GM12878 (cell line): ENCODE measurements at regions of chr3 and their contacts with region 1.

Region 1: GRCh38 chr3:153038779-153039178 is 123.2 kb upstream of the RAP2B start:
- DNase-seq: no peak
- ATAC-seq: no peak
- H3K4me3 ChIP-seq: no peak overlapping the region
- H3K27ac ChIP-seq: no peak overlapping the region
- H3K4me1 ChIP-seq: no peaks in the 10 kb centered on the region
- H3K27me3 ChIP-seq: no peaks in the 10 kb centered on the region
- CTCF ChIP-seq: no peak
- EP300 ChIP-seq: no peak
- POLR2A ChIP-seq: no peak
- RAD21 ChIP-seq: no peak

Region 2: DNA sequence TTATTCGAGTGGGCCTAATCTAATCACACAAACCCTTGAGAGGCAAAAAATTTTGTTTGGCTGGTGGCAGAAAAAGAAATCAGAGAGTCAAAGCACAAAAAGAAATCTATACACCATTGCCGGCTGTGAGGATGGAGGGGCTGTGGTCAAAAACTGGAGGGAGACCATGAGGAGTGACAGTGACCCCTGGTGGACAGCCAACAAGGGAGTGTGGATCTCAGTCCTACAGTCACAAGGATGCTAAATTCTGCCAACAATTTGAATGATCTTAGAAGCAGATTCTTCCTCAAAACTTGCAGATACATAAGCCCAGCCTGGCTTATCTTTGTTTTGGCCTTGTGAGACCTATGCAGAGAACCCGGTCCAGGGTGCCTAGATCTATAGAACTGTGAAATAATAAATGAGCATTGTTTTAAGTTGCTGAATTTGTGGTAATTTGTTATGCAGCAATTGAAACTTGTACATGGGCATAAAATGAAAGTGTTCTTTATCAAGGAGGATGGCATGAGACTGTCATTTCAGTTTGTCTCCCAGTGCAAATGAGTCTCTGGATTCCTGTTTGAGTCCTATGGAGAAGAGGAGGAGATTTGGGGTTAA is 979.4 kb after region 1 on chr3:
- CTCF ChIA-PET with region 1: interaction called, 5 read pairs
- POLR2A ChIA-PET with region 1: no interaction called
- RAD21 ChIA-PET with region 1: interaction called, 4 read pairs
- SMC1A ChIA-PET with region 1: no interaction called
- in situ Hi-C with region 1: loop called (anchors 10 kb)
- intact Hi-C with region 1: no loop called
- DNase-seq: peak; percentile 11
- ATAC-seq: peak; percentile 92
- H3K4me3 ChIP-seq: no peak overlapping the region
- H3K27ac ChIP-seq: no peak overlapping the region
- H3K4me1 ChIP-seq: no peaks in the 10 kb centered on the region
- H3K27me3 ChIP-seq: no peaks in the 10 kb centered on the region
- CTCF ChIP-seq: peak; percentile 65 to 68 (median 67)
- EP300 ChIP-seq: no peak
- POLR2A ChIP-seq: no peak
- RAD21 ChIP-seq: peak; percentile 50